Activated B cell treated with CpG ODN at 0.5 μM for 24 hours (primary cell): ENCODE measurements at regions of chr2 and their contacts with region 1.

Region 1: DNA sequence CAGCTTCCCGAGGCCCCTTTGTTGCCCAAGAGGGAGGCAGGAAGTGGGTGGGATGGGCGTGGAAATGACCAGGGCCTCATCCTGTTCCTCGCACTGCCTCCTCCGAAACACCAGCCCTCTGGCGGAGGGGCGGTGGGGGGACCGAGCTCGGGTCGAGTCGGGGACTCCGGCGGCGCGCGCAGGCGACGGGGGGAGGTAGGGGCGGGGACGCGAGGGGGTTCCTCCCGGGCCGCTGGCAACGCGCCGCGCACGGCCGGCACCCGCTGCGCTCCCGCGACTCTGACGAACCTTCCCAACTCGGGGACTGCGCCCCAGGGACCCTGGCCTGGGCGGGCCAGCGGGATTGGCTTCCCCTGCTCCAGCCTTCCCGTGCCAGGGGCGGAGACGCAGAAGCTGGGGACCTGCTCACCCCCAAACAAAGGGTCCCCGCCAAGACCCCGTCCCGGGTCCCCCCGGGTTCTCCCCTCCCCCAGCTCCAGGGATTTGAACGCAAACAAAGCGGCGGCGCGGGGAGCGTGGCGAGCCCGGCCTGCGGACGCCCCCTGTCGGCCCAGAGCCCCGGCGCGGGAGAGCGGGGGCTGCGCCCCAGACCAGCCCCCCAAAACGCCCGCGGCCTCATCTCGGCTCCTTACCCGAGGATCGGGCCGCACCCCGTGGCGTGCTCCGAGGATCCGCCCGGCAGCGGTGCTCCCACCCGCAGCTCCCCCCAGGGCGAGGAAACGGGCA is 1.2 kb downstream of the SEMA4C start:
- DNase-seq: peak; percentile 40
- ATAC-seq: peak; percentile 39
- H3K4me3 Mint-ChIP-seq: peak overlapping the region; percentile 75
- H3K27ac Mint-ChIP-seq: no peak overlapping the region
- H3K4me1 Mint-ChIP-seq: peaks cover 27% of the 10 kb centered on the region
- H3K27me3 Mint-ChIP-seq: peaks cover 26% of the 10 kb centered on the region
- CTCF ChIP-seq: no peak

Region 2: DNA sequence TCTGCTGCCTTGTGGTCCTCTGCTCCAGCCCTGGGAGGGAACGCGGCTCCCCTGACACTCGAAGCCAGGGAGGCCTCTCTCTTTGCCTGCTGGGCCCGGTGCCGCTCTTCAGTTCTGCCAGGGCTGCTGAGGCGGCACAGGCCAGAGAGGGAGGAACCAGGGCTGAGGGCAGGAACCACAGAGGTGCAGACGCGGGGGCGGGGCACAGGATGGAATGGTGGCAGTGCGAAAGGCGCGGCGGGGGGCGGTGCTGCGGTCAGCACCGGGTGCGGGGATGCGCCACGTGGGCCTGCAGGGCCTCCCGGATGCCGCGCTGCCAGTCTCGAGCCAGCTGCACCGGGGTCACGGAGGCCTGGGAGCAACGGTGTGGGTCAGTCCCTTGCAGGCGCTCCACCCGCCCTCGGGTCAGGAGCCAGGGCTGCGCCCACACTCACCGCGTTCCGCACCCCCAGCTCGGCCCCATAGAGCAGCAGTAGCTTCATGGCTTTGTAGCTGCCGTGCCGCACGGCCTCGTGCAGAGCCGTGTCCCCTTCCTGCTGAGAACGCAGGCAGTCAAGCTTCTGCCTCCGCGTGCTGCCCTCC is 29.3 kb before region 1 on chr2:
- CTCF ChIA-PET with region 1: no interaction called
- POLR2A ChIA-PET with region 1: no interaction called
- intact Hi-C with region 1: loop called (anchors 1 kb)
- DNase-seq: peak; percentile 73
- ATAC-seq: peak; percentile 98
- H3K4me3 Mint-ChIP-seq: peak overlapping the region; percentile 56
- H3K27ac Mint-ChIP-seq: no peak overlapping the region
- H3K4me1 Mint-ChIP-seq: peaks cover 16% of the 10 kb centered on the region
- H3K27me3 Mint-ChIP-seq: no peaks in the 10 kb centered on the region
- CTCF ChIP-seq: no peak

Region 3: DNA sequence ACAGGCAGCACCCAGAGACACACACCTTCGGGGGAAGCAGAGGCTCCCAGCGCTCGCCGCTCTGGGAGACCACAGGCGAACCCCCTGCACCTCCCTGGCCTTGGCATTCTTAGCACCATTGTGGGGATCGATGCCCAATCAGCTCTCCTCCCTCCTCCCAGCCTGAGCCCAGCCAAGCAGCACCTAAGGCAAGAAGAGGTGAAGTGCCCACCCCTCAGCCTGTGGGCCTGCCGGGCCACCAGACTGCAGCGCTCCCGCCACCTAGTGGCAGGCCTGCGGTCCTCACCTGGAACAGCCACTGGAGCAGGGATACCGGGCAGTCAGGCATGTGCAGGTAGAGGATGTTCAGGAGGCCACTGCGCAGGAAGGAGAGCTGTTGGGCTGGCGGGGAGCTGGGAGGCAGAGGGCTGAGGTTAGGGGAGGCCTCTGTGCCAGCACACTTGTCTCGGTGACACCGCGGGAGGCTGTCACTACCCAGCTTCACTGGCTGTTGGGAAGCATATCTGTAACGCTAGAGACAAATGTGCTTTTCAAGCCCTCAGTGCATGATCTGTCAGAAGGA is 82.5 kb after region 1 on chr2:
- CTCF ChIA-PET with region 1: interaction called, 4 read pairs
- POLR2A ChIA-PET with region 1: no interaction called
- intact Hi-C with region 1: loop called (anchors 5 kb)
- DNase-seq: peak; percentile 59
- ATAC-seq: peak; percentile 97
- H3K4me3 Mint-ChIP-seq: no peak overlapping the region
- H3K27ac Mint-ChIP-seq: no peak overlapping the region
- H3K4me1 Mint-ChIP-seq: peaks cover 11% of the 10 kb centered on the region
- H3K27me3 Mint-ChIP-seq: peaks cover 15% of the 10 kb centered on the region
- CTCF ChIP-seq: no peak